ENCODE measurements at regions of chr2 and their contacts with region 1.

Region 1: GRCh38 chr2:160324161-160324800 is 124.2 kb upstream of the ITGB6 start:
- DNase-seq: peak; percentile 15 to 64
- ATAC-seq: peak in 1 of 2 experiments; percentile 71; a peak in 3 of 6 replicates
- H3K4me3 ChIP-seq: no peak overlapping the region
- H3K27ac ChIP-seq: peak overlapping the region in 1 of 2 experiments; percentile 29; a peak in 1 of 6 replicates
- H3K4me1 ChIP-seq: peaks cover 92% of the 10 kb centered on the region
- CTCF ChIP-seq: peak; percentile 79
- EP300 ChIP-seq: no peak
- POLR2A ChIP-seq: no peak
- RAD21 ChIP-seq: peak; percentile 71 to 76

Region 2: DNA sequence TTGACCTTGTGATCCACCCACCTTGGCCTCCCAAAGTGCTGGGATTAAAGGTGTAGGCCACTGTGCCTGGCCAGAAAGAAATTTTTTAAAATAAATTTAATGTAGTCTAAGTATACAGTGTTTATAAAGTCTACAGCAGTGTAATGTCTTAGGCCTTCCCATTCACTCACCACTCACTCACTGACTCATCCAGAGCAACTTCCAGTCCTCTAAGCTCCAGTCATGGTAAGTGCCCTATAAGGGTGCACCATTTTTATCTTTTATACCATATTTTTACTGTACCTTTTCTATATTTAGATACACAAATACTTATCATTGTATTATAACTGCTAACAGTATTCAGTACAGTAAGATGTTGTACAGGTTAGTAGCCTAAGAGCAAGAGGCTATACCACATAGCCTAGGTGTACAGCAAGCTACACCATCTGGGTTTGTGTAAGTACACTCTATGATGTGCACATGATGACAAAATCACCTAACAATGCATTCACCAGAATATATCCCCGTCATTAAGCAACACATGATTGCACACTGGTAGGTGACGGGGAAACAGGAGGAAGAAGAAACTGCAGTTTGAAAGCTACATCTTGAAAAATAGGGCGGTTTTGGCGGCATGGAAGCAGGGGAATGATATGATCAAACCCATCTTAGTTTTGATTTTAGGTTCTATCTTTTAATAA is 19.1 kb before region 1 on chr2:
- CTCF ChIA-PET with region 1: interaction called, 10 read pairs
- POLR2A ChIA-PET with region 1: no interaction called
- DNase-seq: no peak
- ATAC-seq: peak in 1 of 2 experiments; percentile 35; a peak in 1 of 6 replicates
- H3K4me3 ChIP-seq: no peak overlapping the region
- H3K27ac ChIP-seq: no peak overlapping the region
- H3K4me1 ChIP-seq: peaks cover 18% of the 10 kb centered on the region
- CTCF ChIP-seq: no peak
- EP300 ChIP-seq: no peak
- POLR2A ChIP-seq: no peak
- RAD21 ChIP-seq: no peak

Region 3: GRCh38 chr2:160365716-160366367 is 41.6 kb after region 1 on chr2:
- CTCF ChIA-PET with region 1: no interaction called
- POLR2A ChIA-PET with region 1: no interaction called
- DNase-seq: no peak
- ATAC-seq: no peak
- H3K4me3 ChIP-seq: no peak overlapping the region
- H3K27ac ChIP-seq: peak overlapping the region in 1 of 2 experiments; percentile 55; a peak in 3 of 6 replicates
- H3K4me1 ChIP-seq: peaks cover 98% of the 10 kb centered on the region
- CTCF ChIP-seq: no peak
- EP300 ChIP-seq: no peak
- POLR2A ChIP-seq: no peak
- RAD21 ChIP-seq: no peak